ENCODE measurements at regions of chr15 and their contacts with region 1.

Region 1: DNA sequence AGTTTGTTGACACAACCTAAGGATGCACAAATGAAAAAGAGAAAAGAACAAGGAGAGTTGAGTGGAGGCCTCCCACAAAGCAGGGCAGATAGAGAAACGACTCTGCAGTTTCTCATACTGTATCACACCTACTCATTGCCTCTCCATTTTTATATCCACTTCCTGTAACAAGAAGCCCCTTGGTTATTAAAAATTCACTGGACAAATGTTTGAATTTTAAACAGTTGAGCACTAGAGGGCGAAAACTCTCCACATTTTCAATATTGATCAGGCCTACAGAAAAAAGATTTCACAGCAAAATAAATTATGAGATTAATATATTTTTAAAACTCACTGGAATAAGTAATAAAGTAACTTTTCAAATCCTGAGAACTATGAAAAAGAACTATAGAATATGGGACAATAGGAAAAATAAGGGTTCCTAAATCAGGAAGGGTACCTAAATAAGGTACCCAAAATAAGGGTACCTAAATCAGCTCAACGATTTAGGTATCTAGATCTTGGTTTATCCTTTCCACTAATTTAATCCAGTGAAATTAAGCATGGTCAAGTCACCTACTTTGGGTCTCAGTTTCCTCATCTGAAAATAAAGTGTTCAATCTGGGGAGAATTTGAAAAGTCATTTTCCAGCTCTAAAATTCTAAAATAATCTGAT is 47.0 kb upstream of the PPIB start:
- DNase-seq: no peak
- H3K4me3 Mint-ChIP-seq: no peak overlapping the region
- H3K27ac Mint-ChIP-seq: no peak overlapping the region
- H3K4me1 Mint-ChIP-seq: no peaks in the 10 kb centered on the region
- H3K27me3 Mint-ChIP-seq: no peaks in the 10 kb centered on the region

Region 2: GRCh38 chr15:64166104-64166890 is 43.5 kb before region 1 on chr15:
- intact Hi-C with region 1: no loop called
- DNase-seq: no peak
- H3K4me3 Mint-ChIP-seq: no peak overlapping the region
- H3K27ac Mint-ChIP-seq: peak overlapping the region; percentile 69
- H3K4me1 Mint-ChIP-seq: peaks cover 36% of the 10 kb centered on the region
- H3K27me3 Mint-ChIP-seq: no peaks in the 10 kb centered on the region

Region 3: DNA sequence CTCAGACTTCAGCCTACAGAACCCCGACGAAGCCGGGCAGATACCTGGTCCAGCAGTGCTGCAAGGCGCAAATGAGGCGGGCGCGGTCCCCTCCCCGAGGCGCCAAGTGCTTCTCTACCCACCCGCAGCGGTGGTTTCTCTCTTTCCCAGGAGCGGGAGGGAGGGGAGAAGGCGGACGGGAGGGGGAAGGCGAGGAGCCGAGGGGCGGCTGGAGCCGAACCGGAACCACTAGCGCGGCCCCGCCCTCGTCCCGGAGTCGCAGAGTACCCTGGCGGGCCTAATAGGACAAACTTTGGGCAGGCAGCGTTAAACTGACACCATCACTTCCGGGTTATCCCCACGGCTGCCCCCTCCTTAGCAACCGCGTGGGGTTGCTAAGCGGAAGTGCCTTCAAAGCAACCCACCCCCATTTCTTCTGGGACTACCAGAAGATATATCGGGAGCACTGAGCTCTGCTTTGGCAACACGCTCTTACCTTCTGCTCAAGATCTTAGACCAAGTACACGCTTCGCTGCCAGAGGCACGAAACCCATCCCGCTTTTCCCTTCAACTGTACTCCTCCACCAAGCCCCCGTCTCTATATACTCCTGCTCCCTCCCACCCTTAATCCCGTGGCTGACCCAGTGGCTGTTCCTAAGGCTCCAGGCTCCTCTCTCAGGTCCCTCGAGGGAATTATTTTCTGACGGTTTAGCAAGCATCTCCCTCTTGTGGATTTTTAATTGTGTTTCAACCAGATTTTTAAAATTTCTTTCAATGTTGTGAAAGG is 146.3 kb after region 1 on chr15 and contains the start of gene CSNK1G1:
- intact Hi-C with region 1: loop called (anchors 1 kb)
- DNase-seq: peak; percentile 87
- H3K4me3 Mint-ChIP-seq: peak within 1 kb of the TSS; percentile 96
- H3K27ac Mint-ChIP-seq: peak within 1 kb of the TSS; percentile 97
- H3K4me1 Mint-ChIP-seq: peaks cover 19% of the 10 kb centered on the region
- H3K27me3 Mint-ChIP-seq: no peaks in the 10 kb centered on the region
- total RNA-seq, gene CSNK1G1: 31.3 and 33.2 TPM in 2 replicates

Region 4: DNA sequence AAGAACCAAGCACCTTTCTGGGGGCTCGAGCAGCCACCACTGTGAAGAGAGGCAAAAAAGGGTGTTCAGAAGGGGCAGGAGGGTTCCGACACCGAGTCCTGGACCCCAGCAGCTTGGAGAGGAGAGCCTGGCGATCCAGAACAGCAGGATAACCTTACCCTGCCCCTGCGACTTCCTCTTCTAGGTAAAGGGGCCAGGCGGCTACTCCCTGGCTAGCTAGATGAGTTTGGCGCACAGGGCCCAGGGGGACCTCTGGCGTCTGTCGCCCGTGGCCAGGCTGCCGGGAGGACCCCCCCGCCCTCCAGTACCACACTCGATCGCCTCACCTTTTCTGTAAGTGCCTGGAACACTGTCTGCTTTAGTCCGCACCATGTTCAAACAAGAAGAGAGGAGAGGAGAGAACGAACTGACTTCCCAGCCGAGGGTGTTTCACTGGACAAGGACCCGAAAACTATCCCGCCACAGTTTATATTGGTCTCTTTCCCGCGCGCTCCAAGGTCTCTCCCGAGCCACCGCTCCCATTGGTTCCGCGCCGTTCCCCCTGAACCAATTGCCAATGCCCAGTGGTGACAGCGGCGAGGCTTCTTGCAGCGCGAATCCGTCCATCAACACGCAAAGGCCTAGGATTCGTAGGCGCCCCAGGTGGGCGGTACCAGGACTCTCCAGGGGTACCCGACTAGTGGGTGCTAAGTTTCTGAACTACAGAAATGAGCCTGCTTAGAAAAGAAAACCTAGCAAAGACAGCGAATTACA is 171.4 kb after region 1 on chr15 and contains the start of gene PCLAF:
- intact Hi-C with region 1: loop called (anchors 2 kb)
- DNase-seq: peak; percentile 93
- H3K4me3 Mint-ChIP-seq: peak within 1 kb of the TSS; percentile 94
- H3K27ac Mint-ChIP-seq: peak within 1 kb of the TSS; percentile 92
- H3K4me1 Mint-ChIP-seq: peaks cover 16% of the 10 kb centered on the region
- H3K27me3 Mint-ChIP-seq: no peaks in the 10 kb centered on the region
- total RNA-seq, gene PCLAF: 58.6 and 69.8 TPM in 2 replicates

Measured in activated T-helper 1 cell treated with anti-CD3 and anti-CD28 coated beads, Interleukin-12 subunit alpha, Interleukin-12 subunit beta, Interleukin-2, Interleukin-4 antibody, amounts not matched to agents 30 ng/mL and 10 ng/mL and 1 ng/mL, durations not matched to agents 14 hours and 24 hours and 36 hours (primary cell).